ENCODE measurements at regions of chr11 and their contacts with region 1.

Region 1: GRCh38 chr11:64284048-64284961 is at the start of gene BAD:
- DNase-seq: peak; percentile 97
- ATAC-seq: peak; percentile 95
- H3K4me3 Mint-ChIP-seq: peak within 1 kb of the TSS; percentile 80
- H3K27ac Mint-ChIP-seq: peak within 1 kb of the TSS; percentile 76; the same call in 1 of the 2 replicates
- H3K4me1 Mint-ChIP-seq: peaks cover 8% of the 10 kb centered on the region
- H3K27me3 Mint-ChIP-seq: peaks cover 8% of the 10 kb centered on the region
- CTCF ChIP-seq: no peak
- total RNA-seq, gene BAD: 30.5 to 34.7 TPM (median 31.3 TPM) in 3 replicates

Region 2: DNA sequence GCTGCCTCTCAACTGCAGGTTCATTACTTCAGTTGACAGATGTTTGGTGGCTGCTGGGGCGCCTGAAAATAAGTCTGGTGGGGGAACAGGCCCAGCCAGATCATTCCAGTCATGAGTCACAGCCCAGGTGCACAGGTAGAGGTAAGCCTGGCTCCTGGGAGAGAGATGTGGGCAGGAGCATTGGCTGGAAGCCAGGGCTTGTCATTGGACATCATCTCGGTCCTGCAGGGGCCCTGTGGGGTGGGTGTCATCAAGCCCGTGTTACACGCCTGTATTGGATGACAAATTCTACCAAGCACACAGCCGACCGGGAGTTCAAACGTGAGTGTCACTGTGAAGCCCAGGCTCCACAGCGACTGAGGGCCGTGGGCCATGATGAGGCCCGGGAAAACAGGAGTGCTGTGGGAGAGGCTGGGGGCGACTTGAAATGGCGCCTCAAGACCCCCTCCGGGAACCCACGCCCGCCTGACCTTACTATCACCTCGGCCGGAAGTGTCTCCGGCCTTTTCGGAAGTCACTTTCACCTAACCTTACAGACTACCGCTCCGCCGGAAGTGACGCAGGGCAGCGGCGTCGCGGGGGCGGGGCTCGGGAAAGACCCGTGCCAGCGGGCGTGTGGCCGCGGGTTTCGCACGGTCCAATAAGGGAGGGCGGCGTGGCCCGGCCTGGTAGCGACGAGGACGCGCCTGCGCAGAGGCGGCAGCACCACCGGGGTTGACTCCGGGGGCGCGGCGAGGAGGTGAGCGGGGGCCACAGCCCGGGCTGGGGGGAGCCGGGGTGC is 43.7 kb before region 1 on chr11 and contains the start of gene FKBP2:
- CTCF ChIA-PET with region 1: no interaction called
- POLR2A ChIA-PET with region 1: no interaction called
- DNase-seq: peak; percentile 97
- ATAC-seq: peak; percentile 57
- H3K4me3 Mint-ChIP-seq: peak within 1 kb of the TSS; percentile 88
- H3K27ac Mint-ChIP-seq: peak within 1 kb of the TSS; percentile 100
- H3K4me1 Mint-ChIP-seq: peaks cover 30% of the 10 kb centered on the region
- H3K27me3 Mint-ChIP-seq: no peaks in the 10 kb centered on the region
- CTCF ChIP-seq: no peak
- total RNA-seq, gene FKBP2: 57.2 to 65.9 TPM (median 61.7 TPM) in 3 replicates

Region 3: GRCh38 chr11:64269380-64270234 is 14.7 kb before region 1 on chr11:
- CTCF ChIA-PET with region 1: interaction called, 16 read pairs
- POLR2A ChIA-PET with region 1: interaction called, 7 read pairs
- DNase-seq: peak; percentile 98
- ATAC-seq: peak; percentile 83
- H3K4me3 Mint-ChIP-seq: peak overlapping the region; percentile 99
- H3K27ac Mint-ChIP-seq: peak overlapping the region; percentile 100
- H3K4me1 Mint-ChIP-seq: peaks cover 21% of the 10 kb centered on the region
- H3K27me3 Mint-ChIP-seq: no peaks in the 10 kb centered on the region
- CTCF ChIP-seq: no peak

Region 4: GRCh38 chr11:64516226-64516625 is 231.9 kb after region 1 on chr11:
- CTCF ChIA-PET with region 1: no interaction called
- POLR2A ChIA-PET with region 1: no interaction called
- DNase-seq: no peak
- ATAC-seq: no peak
- H3K4me3 Mint-ChIP-seq: no peak overlapping the region
- H3K27ac Mint-ChIP-seq: no peak overlapping the region
- H3K4me1 Mint-ChIP-seq: no peaks in the 10 kb centered on the region
- H3K27me3 Mint-ChIP-seq: peaks cover 68% of the 10 kb centered on the region
- CTCF ChIP-seq: peak; percentile 44; the same call in 1 of the 2 replicates

Measured in WTC11 (cell line).